Transverse colon (tissue), 4 donors: ENCODE measurements at regions of chr2 and their contacts with region 1.

Region 1: DNA sequence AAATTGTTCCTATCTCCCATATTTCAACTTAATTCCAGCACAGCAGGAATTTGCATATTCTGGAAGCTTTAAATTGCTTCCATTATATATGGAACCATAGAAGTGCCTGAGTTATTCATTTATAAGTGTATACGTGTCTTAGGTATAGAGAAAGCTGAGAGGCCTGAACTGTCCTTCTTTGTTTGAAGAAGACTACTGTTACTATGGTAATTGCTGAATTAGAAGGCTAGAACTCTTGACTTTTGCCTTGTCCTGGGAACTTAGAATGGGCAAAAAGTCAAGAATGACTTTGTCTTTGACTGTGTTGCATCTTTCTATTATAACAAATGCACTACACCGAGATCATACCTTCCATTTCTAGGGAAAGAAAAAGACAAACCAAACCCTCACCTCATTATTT is 15.7 kb downstream of the CAMKMT start:
- DNase-seq: no peak
- H3K4me3 ChIP-seq: no peak overlapping the region
- H3K27ac ChIP-seq: no peak overlapping the region
- H3K4me1 ChIP-seq: no peaks in the 10 kb centered on the region
- H3K27me3 ChIP-seq: no peaks in the 10 kb centered on the region
- CTCF ChIP-seq: no peak
- EP300 ChIP-seq: no peak
- POLR2A ChIP-seq: no peak

Region 2: DNA sequence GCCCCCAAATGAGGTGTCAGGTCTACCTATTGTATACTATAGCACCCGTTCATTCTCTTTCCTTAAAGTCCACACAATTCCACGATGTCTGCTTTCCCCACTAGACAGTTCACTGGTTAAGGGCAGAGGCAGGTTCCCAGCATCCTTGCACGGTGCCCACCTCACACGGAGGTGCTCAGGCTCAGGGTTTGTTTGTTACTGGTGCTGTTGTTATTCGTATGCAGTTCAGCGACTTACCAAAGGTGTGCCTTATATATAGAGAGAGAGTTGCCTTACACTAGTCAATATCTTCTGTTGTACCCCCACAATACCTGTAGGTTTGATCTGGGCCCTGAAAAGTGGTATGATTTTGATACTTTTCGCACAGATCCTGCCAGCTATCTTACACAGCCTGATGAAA is 71.6 kb before region 1 on chr2:
- in situ Hi-C with region 1: no loop called
- intact Hi-C with region 1: no loop called
- DNase-seq: no peak
- H3K4me3 ChIP-seq: no peak overlapping the region
- H3K27ac ChIP-seq: no peak overlapping the region
- H3K4me1 ChIP-seq: no peaks in the 10 kb centered on the region
- H3K27me3 ChIP-seq: no peaks in the 10 kb centered on the region
- CTCF ChIP-seq: no peak
- EP300 ChIP-seq: no peak
- POLR2A ChIP-seq: no peak

Region 3: DNA sequence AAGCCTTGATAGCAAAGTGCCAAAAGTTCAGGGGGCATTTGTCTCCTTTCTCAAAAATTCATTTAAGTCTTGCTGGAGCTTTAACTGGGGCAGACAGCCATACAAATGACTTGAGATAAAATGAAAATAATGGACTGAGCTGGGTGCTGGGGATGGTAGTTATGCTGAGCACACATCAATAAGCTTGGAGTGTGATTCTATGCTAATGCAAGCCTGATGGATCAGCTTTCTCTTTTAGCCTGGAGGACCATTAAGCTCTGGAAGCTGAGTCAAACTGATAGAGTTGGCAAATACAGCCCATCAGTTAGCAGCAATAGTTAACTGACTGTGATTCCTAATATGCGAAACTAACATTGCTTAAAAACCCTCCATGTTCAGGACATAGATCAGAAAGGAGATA is 82.3 kb after region 1 on chr2:
- in situ Hi-C with region 1: no loop called
- intact Hi-C with region 1: loop called (anchors 2 kb)
- DNase-seq: no peak
- H3K4me3 ChIP-seq: no peak overlapping the region
- H3K27ac ChIP-seq: no peak overlapping the region
- H3K4me1 ChIP-seq: no peaks in the 10 kb centered on the region
- H3K27me3 ChIP-seq: no peaks in the 10 kb centered on the region
- CTCF ChIP-seq: no peak
- EP300 ChIP-seq: no peak
- POLR2A ChIP-seq: no peak